Activated CD4-positive, alpha-beta T cell treated with anti-CD3 and anti-CD28 coated beads, Interleukin-2, amount 10 ng/mL, durations not matched to agents 24 days and 14 days (primary cell): ENCODE measurements at regions of chr15 and their contacts with region 1.

Region 1: GRCh38 chr15:51846463-51847230 is 17.2 kb downstream of the TMOD3 start:
- DNase-seq: no peak
- H3K4me3 Mint-ChIP-seq: peak overlapping the region; percentile 18
- H3K27ac Mint-ChIP-seq: peak overlapping the region; percentile 64
- H3K4me1 Mint-ChIP-seq: peaks cover 48% of the 10 kb centered on the region
- H3K27me3 Mint-ChIP-seq: no peaks in the 10 kb centered on the region

Region 2: DNA sequence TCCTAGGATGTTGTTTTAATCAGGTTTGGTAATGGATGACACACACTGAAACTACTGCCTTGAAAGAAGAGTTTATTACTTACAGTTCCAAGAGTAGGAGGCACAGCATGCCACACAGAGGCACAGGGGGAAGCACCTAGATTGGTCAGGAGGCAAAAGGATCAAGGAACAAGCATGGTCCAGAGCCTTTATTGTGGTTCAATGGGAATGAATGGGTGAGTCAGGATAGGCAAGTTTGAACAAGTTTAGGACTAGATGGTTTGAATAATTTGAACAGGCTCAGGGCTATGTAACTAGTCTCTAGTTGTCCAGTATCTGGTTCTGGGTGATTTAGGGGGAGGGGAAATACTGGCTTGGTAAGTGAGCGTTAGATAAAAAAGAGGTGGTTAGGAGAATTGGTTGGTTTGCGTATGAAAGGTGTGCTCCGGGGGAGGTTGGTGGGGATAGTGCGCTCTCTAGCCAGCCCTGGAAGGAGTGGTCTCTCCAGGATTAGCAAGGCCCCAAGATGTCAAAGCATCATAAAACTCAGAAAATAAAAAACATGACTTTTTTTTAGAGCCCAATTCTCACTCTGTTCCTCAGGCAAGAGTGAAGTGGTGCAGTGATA is 17.9 kb after region 1 on chr15:
- intact Hi-C with region 1: loop called (anchors 1 kb)
- DNase-seq: no peak
- H3K4me3 Mint-ChIP-seq: peak overlapping the region; percentile 2
- H3K27ac Mint-ChIP-seq: peak overlapping the region; percentile 82
- H3K4me1 Mint-ChIP-seq: peaks cover 47% of the 10 kb centered on the region
- H3K27me3 Mint-ChIP-seq: no peaks in the 10 kb centered on the region